Colonic mucosa (tissue), 4 donors: ENCODE measurements at regions of chr7 and their contacts with region 1.

Region 1: DNA sequence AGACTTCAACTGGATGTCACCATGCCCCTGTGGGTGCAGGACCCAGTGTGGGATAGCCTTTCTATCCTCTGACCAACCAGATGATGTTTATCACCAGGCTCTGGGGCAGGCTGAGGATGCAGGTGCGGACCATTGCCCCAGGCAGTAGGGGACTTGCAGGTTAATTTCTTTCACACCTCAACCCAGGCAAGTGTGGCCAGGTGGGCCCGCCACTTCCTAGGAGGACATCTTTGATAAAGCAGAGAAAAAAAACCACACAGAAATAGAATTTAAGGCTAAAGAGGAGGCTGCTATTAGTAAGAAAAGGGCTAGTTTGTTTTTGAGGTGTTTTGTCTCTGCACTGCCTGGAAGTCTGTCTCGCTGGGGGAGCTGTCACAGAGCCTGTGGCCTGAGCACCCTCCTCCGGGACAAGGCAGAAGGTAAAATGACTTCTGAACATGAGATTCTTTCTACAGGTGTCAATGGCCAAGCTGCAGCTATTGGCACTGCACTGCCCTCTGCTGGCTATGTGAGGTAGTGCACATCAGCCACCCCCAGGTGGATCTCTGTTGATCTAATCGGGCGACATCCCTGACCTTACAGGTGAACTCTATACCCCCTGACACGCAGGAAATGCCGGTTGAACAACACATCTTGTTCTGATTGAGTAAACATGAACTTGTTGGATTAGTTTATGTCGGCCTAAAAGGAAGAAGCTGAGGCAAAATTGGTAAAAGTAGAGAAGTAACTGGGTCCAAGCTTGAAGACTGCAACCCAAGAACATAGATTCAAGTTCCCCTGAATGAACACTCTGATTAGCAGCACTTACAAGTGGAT is 21.0 kb downstream of the UPP1 start:
- DNase-seq: peak; percentile 91
- H3K4me3 ChIP-seq: no peak overlapping the region
- H3K27ac ChIP-seq: no peak overlapping the region
- H3K4me1 ChIP-seq: no peaks in the 10 kb centered on the region
- H3K27me3 ChIP-seq: no peaks in the 10 kb centered on the region
- CTCF ChIP-seq: peak; percentile 99

Region 2: GRCh38 chr7:47945261-47946001 is 164.6 kb before region 1 on chr7:
- intact Hi-C with region 1: loop called (anchors 2 kb)
- DNase-seq: peak; percentile 90
- H3K4me3 ChIP-seq: no peak overlapping the region
- H3K27ac ChIP-seq: no peak overlapping the region
- H3K4me1 ChIP-seq: peaks cover 7% of the 10 kb centered on the region
- H3K27me3 ChIP-seq: no peaks in the 10 kb centered on the region
- CTCF ChIP-seq: peak; percentile 75

Region 3: GRCh38 chr7:47991741-47992311 is 118.2 kb before region 1 on chr7:
- intact Hi-C with region 1: loop called (anchors 5 kb)
- DNase-seq: peak; percentile 90
- H3K4me3 ChIP-seq: peak overlapping the region; percentile 47
- H3K27ac ChIP-seq: peak overlapping the region; percentile 81
- H3K4me1 ChIP-seq: peaks cover 4% of the 10 kb centered on the region
- H3K27me3 ChIP-seq: no peaks in the 10 kb centered on the region
- CTCF ChIP-seq: peak; percentile 46

Region 4: DNA sequence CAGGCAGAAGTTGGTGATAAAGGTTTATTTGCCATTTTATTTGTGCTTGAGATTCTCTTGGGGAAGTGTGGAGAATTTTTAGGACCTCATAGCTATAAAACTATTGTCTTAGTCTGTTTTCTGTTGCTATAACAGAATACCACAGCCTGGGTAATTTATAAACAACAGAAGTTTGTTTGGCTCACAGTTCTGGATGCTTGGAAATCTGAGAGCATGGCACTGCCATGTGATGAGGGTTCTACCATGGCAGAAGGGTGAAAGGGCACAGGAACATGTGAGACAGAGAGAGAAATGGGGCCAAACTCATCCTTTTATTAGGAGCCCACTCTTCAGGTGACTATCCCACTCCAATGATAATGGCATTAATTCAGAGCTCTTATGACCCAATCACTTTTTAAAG is 93.4 kb before region 1 on chr7:
- intact Hi-C with region 1: no loop called
- DNase-seq: no peak
- H3K4me3 ChIP-seq: no peak overlapping the region
- H3K27ac ChIP-seq: no peak overlapping the region
- H3K4me1 ChIP-seq: no peaks in the 10 kb centered on the region
- H3K27me3 ChIP-seq: no peaks in the 10 kb centered on the region
- CTCF ChIP-seq: no peak

Region 5: GRCh38 chr7:48035301-48035966 is 74.6 kb before region 1 on chr7 and contains the start of gene C7orf57:
- intact Hi-C with region 1: loop called (anchors 10 kb)
- DNase-seq: peak; percentile 89
- H3K4me3 ChIP-seq: peak within 1 kb of the TSS; percentile 59
- H3K27ac ChIP-seq: no peak within 1 kb of the TSS
- H3K4me1 ChIP-seq: peaks cover 4% of the 10 kb centered on the region
- H3K27me3 ChIP-seq: peaks cover 4% of the 10 kb centered on the region
- CTCF ChIP-seq: no peak
- total RNA-seq, gene C7orf57: 0.24 TPM in 1 of 2 donors, not detected in the other